GM13977 (cell line): ENCODE measurements at regions of chr11 and their contacts with region 1.

Region 1: GRCh38 chr11:94800414-94800813 is 32.3 kb downstream of the AMOTL1 start:
- DNase-seq: no peak
- CTCF ChIP-seq: no peak

Region 2: GRCh38 chr11:94705896-94706615 is 94.4 kb before region 1 on chr11:
- in situ Hi-C with region 1: loop called (anchors 25 kb)
- DNase-seq: no peak
- CTCF ChIP-seq: no peak

Region 3: DNA sequence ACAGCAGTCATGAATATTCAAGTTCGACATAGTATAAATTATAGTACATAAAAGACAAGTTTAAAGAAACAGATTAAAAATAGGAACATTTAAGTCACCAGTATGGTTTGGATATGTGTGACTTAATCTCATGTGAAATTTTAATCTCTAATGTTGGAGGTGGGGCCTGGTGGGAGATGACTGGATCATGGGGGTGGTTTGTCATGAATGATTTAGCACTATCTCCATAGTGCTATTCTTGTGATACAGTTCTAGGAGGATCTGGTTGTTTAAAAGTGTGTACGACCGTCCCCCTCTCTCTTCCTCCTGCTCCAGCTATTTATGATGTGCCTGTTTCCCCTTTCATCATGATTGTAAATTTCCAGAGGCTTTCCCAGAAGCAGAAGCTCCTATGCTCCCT is 227.9 kb after region 1 on chr11:
- in situ Hi-C with region 1: no loop called
- DNase-seq: no peak
- CTCF ChIP-seq: no peak